A549 (cell line): ENCODE measurements at regions of chr19 and their contacts with region 1.

Region 1: GRCh38 chr19:12983542-12984142 is 11.6 kb upstream of the NFIX start:
- DNase-seq: peak; percentile 52 to 78
- ATAC-seq: peak; percentile 72 to 77
- H3K4me3 ChIP-seq: peak overlapping the region; percentile 42
- H3K27ac ChIP-seq: peak overlapping the region; percentile 58 to 84
- H3K4me1 ChIP-seq: 0 out of 3 replicates have a peak, but pooled peaks cover 3% of the 10 kb centered on the region
- CTCF ChIP-seq: peak; percentile 83
- EP300 ChIP-seq: no peak
- POLR2A ChIP-seq: no peak
- RAD21 ChIP-seq: peak; percentile 57 to 76

Region 2: GRCh38 chr19:12749938-12750521 is 233.6 kb before region 1 on chr19:
- CTCF ChIA-PET with region 1: no interaction called
- POLR2A ChIA-PET with region 1: no interaction called
- DNase-seq: no peak
- ATAC-seq: peak; percentile 30; a peak in 2 of 6 replicates
- H3K4me3 ChIP-seq: no peak overlapping the region
- H3K27ac ChIP-seq: peak overlapping the region in 1 of 2 experiments; percentile 47; a peak in 1 of 6 replicates
- H3K4me1 ChIP-seq: peaks cover 5% of the 10 kb centered on the region; the same call in 1 of the 3 replicates
- CTCF ChIP-seq: no peak
- EP300 ChIP-seq: no peak
- POLR2A ChIP-seq: no peak
- RAD21 ChIP-seq: no peak

Region 3: DNA sequence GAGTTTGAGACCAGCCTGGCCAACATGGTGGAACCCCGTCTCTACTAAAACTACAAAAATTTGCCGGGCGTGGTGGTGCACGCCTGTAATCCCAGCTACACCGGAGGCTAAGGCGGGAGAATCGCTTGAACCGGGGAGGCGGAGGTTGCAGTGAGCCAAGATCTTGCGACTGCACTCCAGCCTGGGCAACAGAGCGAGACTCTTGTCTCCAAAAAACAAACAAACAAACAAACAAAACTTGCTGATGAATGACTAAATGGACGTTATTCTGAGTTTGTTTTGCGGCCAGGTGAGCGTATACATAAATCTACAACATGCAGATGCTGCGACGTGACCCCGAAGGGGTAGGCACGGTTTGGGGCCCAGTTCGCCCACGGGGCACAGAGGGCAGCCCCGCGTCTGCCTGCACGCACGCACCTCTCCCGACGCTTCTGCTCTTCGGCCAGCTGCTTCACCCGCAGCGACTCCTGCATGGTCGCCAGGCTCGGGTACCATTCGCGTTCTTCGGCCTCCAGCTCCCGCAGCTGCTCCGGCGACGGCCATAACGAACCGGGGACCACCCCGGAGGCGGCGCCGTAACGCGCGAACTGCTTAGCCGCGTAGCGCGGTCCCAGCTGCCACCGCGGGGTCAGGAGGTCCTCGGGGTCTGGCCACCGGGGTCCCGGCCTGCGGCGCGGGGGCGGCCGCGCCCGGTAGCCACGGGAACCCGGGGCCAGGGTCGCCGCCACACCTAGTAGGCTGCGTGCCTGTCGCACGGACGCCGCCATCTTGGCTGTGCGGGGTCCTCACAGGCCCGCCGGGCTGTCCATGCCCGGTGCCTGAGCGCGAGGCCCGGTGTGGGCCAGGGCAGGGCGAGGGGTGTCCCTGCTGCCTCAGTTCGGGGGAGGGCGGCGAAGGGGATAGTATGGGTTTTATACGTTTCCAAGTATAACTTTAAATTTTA is 26.9 kb before region 1 on chr19 and contains the start of gene GADD45GIP1:
- CTCF ChIA-PET with region 1: interaction called, 13 read pairs
- POLR2A ChIA-PET with region 1: no interaction called
- DNase-seq: peak; percentile 61 to 83
- ATAC-seq: peak; percentile 92 to 95
- H3K4me3 ChIP-seq: peak within 1 kb of the TSS; percentile 87
- H3K27ac ChIP-seq: peak within 1 kb of the TSS; percentile 98 to 100
- H3K4me1 ChIP-seq: peaks cover 21% of the 10 kb centered on the region; the same call in 2 of the 3 replicates
- CTCF ChIP-seq: no peak
- EP300 ChIP-seq: no peak
- POLR2A ChIP-seq: peak; percentile 86
- RAD21 ChIP-seq: no peak
- polyA plus RNA-seq, gene GADD45GIP1: 18.3 and 26.4 TPM in 2 replicates

Region 4: DNA sequence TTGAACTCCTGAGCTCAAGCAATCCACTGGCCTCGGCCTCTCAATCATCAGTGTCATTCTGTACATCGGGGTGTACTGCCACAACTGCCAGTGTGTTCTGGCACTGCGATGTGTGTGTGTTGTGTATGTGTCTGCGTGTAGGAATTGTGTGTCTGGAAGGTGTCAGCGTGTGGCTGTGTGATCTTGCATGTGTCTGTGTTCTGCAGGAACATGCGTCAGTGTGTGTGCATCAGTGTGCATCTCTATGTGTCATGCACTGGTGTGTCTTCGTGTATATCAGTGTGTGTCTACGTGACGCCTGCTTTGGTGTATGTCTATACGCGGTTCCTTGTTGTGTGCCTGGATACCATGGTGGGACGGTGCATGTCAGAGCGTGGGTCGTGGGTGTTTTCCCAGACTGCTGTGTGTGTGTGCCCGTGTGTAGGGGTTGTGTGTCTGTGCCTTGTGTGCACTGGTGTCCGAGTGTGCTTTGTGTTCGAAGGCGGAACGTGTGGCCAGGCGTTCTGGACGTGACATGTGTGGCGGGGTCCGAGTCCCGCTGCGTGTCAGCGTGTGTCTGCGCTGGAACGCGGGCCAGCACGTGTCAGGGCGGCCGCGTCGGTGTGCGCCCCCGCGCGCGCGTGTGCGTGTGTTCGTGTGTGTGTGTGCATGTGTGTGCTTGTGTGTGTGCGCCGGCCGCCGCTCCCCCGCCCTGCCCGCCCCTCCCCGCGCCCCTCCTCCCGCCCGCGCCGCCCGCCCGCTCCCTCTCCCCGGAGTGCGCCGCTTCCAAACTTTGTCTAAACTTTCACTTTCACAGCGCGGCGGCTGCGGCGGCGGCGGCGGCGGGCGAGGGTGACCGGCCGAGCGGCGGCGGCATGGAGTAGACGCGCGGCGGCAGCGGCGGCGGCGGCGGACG is 11.3 kb after region 1 on chr19 and contains the start of gene NFIX:
- CTCF ChIA-PET with region 1: interaction called, 10 read pairs
- POLR2A ChIA-PET with region 1: interaction called, 3 read pairs
- DNase-seq: no peak
- ATAC-seq: peak; percentile 27 to 40; a peak in 3 of 6 replicates
- H3K4me3 ChIP-seq: peak within 1 kb of the TSS; percentile 62
- H3K27ac ChIP-seq: peak within 1 kb of the TSS; percentile 60 to 94
- H3K4me1 ChIP-seq: no peaks in the 10 kb centered on the region
- CTCF ChIP-seq: no peak
- EP300 ChIP-seq: no peak
- POLR2A ChIP-seq: no peak
- RAD21 ChIP-seq: no peak
- polyA plus RNA-seq, gene NFIX: 0.52 and 1.0 TPM in 2 replicates

Region 5: GRCh38 chr19:13060964-13061927 is 77.6 kb after region 1 on chr19:
- CTCF ChIA-PET with region 1: interaction called, 127 read pairs
- POLR2A ChIA-PET with region 1: interaction called, 5 read pairs
- DNase-seq: peak; percentile 68 to 73
- ATAC-seq: peak; percentile 94 to 97
- H3K4me3 ChIP-seq: peak overlapping the region; percentile 53
- H3K27ac ChIP-seq: peak overlapping the region; percentile 85 to 89
- H3K4me1 ChIP-seq: peaks cover 11% of the 10 kb centered on the region; the same call in 2 of the 3 replicates
- CTCF ChIP-seq: peak; percentile 78
- EP300 ChIP-seq: no peak
- POLR2A ChIP-seq: no peak; the same call in 1 of the 2 replicates
- RAD21 ChIP-seq: peak; percentile 77 to 82

Region 6: DNA sequence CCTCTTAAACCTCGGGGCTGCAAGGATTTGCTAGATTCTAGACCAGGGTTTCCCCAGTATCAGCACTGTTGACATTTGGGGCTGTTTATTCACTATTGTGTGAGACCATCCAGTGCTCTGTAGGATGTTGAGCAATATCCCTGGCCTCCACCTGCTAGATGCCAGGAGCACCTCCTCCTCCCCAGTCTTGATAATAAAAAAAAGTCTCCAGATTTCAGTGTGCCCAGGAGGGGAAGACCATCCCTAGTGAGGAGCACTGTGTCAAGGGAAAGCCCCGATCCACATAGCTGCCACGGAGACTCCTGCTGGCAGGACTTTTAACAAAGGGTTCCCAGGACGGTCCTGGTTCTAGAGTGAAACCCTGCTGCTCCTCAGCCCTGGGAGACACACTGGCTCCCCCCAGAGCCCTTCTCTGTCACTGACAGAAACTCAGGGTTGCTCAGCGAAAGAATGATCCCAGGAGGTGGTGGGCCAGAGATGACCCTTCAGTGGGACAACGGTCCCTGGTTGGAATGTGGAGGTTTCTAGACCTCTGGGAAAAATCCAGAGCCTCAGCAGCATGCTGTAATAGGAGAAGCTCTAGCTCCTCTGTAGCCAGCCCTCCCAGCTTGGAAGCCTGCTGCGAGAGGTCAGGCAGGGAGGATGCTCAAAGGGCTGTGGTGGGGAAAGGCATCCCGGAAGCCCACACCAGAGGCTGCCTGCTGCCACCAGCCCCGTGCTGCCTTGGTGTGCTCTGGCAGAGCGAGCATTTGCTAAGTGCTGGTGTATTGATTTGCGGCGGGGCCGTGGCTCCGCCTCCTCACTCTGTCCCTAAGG is 98.8 kb after region 1 on chr19:
- CTCF ChIA-PET with region 1: interaction called, 39 read pairs
- POLR2A ChIA-PET with region 1: no interaction called
- DNase-seq: peak; percentile 58 to 61
- ATAC-seq: peak; percentile 79 to 91
- H3K4me3 ChIP-seq: no peak overlapping the region
- H3K27ac ChIP-seq: no peak overlapping the region
- H3K4me1 ChIP-seq: peaks cover 17% of the 10 kb centered on the region
- CTCF ChIP-seq: peak; percentile 22; the same call in 1 of the 3 replicates
- EP300 ChIP-seq: no peak
- POLR2A ChIP-seq: no peak
- RAD21 ChIP-seq: peak; percentile 32 to 51; a peak in 3 of 5 replicates

Region 7: GRCh38 chr19:13093407-13094105 is 109.9 kb after region 1 on chr19:
- CTCF ChIA-PET with region 1: interaction called, 309 read pairs
- POLR2A ChIA-PET with region 1: interaction called, 3 read pairs
- DNase-seq: peak; percentile 76 to 86
- ATAC-seq: peak; percentile 72 to 87
- H3K4me3 ChIP-seq: no peak overlapping the region
- H3K27ac ChIP-seq: peak overlapping the region in 1 of 2 experiments; percentile 79; a peak in 3 of 6 replicates
- H3K4me1 ChIP-seq: peaks cover 57% of the 10 kb centered on the region
- CTCF ChIP-seq: peak; percentile 81
- EP300 ChIP-seq: no peak
- POLR2A ChIP-seq: no peak
- RAD21 ChIP-seq: peak; percentile 89 to 94

Region 8: GRCh38 chr19:13262450-13262849 is 278.8 kb after region 1 on chr19:
- CTCF ChIA-PET with region 1: interaction called, 19 read pairs
- POLR2A ChIA-PET with region 1: no interaction called
- DNase-seq: peak; percentile 43 to 45
- ATAC-seq: peak; percentile 44 to 75; a peak in 4 of 6 replicates
- H3K4me3 ChIP-seq: no peak overlapping the region
- H3K27ac ChIP-seq: peak overlapping the region in 1 of 2 experiments; percentile 5; a peak in 2 of 6 replicates
- H3K4me1 ChIP-seq: peaks cover 13% of the 10 kb centered on the region; the same call in 2 of the 3 replicates
- CTCF ChIP-seq: peak; percentile 61
- EP300 ChIP-seq: no peak
- POLR2A ChIP-seq: no peak
- RAD21 ChIP-seq: peak; percentile 59 to 69